IMR-90 (cell line): ENCODE measurements at regions of chr18 and their contacts with region 1.

Region 1: GRCh38 chr18:33097126-33097525 is 324.3 kb upstream of the KLHL14 start:
- DNase-seq: no peak
- ATAC-seq: no peak
- H3K4me3 ChIP-seq: no peak overlapping the region
- H3K27ac ChIP-seq: no peak overlapping the region
- H3K4me1 ChIP-seq: no peaks in the 10 kb centered on the region
- H3K27me3 ChIP-seq: no peaks in the 10 kb centered on the region
- CTCF ChIP-seq: no peak
- POLR2A ChIP-seq: no peak
- RAD21 ChIP-seq: no peak

Region 2: DNA sequence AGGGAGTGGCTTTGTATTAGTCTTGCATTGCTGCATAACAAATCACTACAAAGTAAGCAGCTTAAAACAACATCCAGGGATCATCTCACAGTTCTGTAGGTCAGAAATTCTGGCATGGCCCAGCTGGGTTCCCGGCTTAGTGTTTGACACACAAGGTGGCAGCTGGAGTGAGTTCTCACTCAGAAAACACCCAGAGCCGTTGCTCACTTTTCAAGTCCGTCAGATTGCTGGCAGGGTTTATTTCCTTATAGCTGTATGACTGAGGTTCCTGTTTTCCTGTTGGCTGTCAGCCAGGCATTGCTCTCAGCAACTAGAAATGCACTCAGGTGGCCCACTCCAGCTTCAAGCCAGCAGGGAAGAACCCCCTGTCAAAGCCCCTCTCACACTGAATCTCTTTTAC is 19.2 kb after region 1 on chr18:
- CTCF ChIA-PET with region 1: no interaction called
- POLR2A ChIA-PET with region 1: no interaction called
- dilution Hi-C with region 1: no loop called
- in situ Hi-C with region 1: no loop called
- intact Hi-C with region 1: loop called (anchors 1 kb)
- DNase-seq: no peak
- ATAC-seq: no peak
- H3K4me3 ChIP-seq: no peak overlapping the region
- H3K27ac ChIP-seq: no peak overlapping the region
- H3K4me1 ChIP-seq: no peaks in the 10 kb centered on the region
- H3K27me3 ChIP-seq: no peaks in the 10 kb centered on the region
- CTCF ChIP-seq: no peak
- POLR2A ChIP-seq: no peak
- RAD21 ChIP-seq: no peak